PC-9 (cell line): ENCODE measurements at regions of chr15 and their contacts with region 1.

Region 1: GRCh38 chr15:40613080-40613479 is 19.0 kb downstream of the KNL1 start:
- DNase-seq: no peak
- H3K4me3 ChIP-seq: no peak overlapping the region
- H3K27ac ChIP-seq: no peak overlapping the region
- H3K4me1 ChIP-seq: no peaks in the 10 kb centered on the region
- H3K27me3 ChIP-seq: no peaks in the 10 kb centered on the region
- CTCF ChIP-seq: no peak

Region 2: GRCh38 chr15:40477642-40478327 is 135.3 kb before region 1 on chr15:
- CTCF ChIA-PET with region 1: no interaction called
- POLR2A ChIA-PET with region 1: interaction called, 10 read pairs
- intact Hi-C with region 1: no loop called
- DNase-seq: peak; percentile 60 to 62
- H3K4me3 ChIP-seq: no peak overlapping the region
- H3K27ac ChIP-seq: peak overlapping the region; percentile 18; the same call in 1 of the 2 replicates
- H3K4me1 ChIP-seq: peaks cover 20% of the 10 kb centered on the region
- H3K27me3 ChIP-seq: no peaks in the 10 kb centered on the region
- CTCF ChIP-seq: no peak

Region 3: DNA sequence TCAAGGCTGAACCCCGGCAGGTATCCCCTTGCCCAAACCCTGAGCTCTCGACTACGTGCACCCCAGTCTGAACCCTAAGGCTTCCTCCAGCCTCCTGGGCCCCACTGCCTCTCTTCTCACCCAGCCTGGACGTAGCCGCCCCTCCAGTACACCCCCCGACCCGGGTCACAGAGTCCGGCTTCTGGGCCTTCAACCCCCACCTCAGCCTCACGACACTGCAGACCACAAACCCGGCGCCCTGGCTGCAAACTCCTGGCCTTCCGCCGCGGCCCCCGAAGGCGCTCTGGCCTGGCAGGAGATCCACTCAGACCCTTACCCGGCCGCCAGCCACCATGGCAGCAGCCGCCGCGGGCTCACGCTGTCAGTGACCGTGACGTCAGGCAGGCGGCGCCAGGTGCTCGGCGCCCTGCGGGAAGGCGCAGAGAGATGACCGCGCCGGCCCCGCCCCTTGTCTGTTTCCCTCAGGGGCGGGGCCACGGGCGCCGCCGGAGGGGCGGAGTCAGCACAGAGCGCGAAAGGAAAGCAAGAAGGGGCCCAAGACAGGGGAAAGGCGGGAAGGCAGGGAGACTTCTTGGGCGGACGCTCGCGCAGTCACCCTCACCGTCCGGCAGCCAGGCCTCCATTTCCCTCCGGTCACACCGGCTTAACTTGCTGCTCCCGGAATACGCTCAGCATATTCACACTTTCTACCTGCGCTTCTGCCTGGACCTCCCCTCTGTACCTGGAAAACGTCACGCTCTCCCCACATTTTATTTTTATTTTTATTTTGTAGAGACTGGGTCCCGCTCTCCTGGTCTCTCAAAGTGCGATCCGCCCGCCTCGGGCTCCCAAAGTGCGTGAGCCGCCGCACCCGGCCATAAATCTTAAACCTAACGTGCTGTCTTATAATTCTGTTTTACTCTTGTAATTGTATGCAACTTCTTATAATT is 142.1 kb after region 1 on chr15 and contains the start of gene RMDN3:
- CTCF ChIA-PET with region 1: no interaction called
- POLR2A ChIA-PET with region 1: no interaction called
- intact Hi-C with region 1: no loop called
- DNase-seq: peak; percentile 73 to 92
- H3K4me3 ChIP-seq: peak within 1 kb of the TSS; percentile 93
- H3K27ac ChIP-seq: peak within 1 kb of the TSS; percentile 59
- H3K4me1 ChIP-seq: peaks cover 12% of the 10 kb centered on the region; the same call in 1 of the 2 replicates
- H3K27me3 ChIP-seq: no peaks in the 10 kb centered on the region
- CTCF ChIP-seq: no peak
- total RNA-seq, gene RMDN3: 15.7 and 19.8 TPM in 2 replicates